ENCODE measurements at regions of chr1 and their contacts with region 1.

Region 1: GRCh38 chr1:206982216-206982615 is 12.0 kb upstream of the FCAMR start:
- DNase-seq: no peak
- H3K4me3 ChIP-seq: no peak overlapping the region
- H3K27ac ChIP-seq: no peak overlapping the region
- H3K4me1 ChIP-seq: no peaks in the 10 kb centered on the region
- H3K27me3 ChIP-seq: peaks cover 0 to 12% (median 0%) of the 10 kb centered on the region in 7 donors
- CTCF ChIP-seq: peak; percentile 49 to 81 (median 72)
- POLR2A ChIP-seq: no peak

Region 2: DNA sequence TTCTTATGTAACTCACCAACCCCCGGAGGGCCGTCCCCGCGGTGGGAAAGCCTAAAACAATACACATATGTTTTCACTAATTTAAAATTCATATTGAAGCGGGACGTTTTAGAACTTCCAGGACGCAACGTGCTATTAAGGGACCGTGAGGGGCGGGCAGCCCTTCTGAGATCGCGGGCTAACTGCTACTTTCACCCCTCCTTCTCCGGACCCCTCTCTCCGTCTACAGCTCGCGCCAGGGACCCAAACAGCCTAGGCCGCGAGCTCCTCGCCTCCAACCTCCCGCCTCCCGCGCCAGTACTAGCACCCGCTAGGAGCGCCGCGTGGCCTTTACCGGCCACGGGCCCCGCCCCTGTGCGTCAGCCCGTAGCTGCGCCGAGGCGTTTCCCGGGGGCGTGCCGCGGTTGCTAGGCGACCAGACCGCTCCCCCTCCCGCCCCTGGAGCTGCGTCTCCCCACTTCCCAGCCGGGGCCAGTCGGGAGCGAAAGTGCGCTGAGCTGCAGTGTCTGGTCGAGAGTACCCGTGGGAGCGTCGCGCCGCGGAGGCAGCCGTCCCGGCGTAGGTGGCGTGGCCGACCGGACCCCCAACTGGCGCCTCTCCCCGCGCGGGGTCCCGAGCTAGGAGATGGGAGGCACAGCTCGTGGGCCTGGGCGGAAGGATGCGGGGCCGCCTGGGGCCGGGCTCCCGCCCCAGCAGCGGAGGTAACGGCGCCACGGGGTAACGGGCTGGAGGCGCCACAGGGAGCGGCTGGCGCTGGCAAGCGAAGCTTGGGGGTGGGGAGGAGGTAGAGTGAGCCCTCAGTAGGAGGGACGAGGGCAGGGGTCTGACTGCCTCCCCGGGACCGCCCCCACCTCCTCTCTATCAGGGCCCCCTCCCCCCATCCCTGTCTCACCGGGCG is 346.9 kb before region 1 on chr1 and contains the start of gene DYRK3:
- intact Hi-C with region 1: loop called (anchors 10 kb)
- DNase-seq: peak; percentile 97
- H3K4me3 ChIP-seq: peak within 1 kb of the TSS; percentile 68 to 96 (median 86)
- H3K27ac ChIP-seq: peak within 1 kb of the TSS in 7 of 8 donors; percentile 56 to 80 (median 68)
- H3K4me1 ChIP-seq: peaks cover 8 to 46% (median 28%) of the 10 kb centered on the region in 6 donors
- H3K27me3 ChIP-seq: peaks cover 0 to 11% (median 0%) of the 10 kb centered on the region in 7 donors
- CTCF ChIP-seq: peak in 7 of 11 experiments; percentile 5 to 49 (median 31)
- POLR2A ChIP-seq: peak in 1 of 3 donors; percentile 56
- total RNA-seq, gene DYRK3: 2.4 to 6.6 (median 4.3) TPM

Region 3: DNA sequence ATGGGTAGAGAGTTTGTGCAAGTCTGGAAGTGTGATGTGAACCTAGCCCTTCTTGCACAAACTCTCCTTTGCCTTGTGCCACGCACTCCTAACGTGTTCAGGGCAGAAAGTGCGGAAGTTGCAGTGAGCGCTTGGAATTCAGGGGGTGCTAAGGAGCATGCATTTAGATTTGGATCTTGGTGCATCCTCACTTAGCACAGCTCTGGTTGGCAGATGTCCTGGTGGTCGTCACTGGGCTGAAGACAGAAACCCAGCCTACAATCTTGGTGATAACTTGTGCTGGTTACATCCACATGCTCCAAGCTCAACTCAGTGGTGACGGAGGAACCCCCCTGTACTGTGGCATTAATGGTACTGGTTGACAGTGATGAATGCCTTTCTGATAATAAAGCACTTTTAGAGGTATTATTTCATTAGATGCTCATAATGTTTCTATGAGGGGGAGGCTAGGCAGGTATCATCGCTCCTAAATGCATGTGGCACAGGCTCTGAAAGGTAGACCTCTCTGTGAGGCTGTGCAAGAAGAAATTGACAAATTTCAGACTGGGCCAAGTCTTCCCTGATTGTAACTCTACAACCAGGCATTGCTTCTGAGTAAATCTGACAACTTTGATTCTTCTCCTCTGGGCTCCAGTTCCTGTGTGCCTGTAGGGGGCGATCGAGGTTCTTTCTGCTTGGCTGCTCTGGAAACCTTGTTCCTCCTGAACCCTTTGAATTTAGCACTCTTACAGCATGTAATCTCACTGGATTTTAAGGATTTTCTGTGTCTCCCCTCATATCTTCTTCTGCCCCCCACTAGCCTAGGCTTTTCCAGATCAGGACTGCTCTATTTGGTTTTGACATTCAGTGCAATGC is 256.9 kb before region 1 on chr1:
- intact Hi-C with region 1: loop called (anchors 10 kb)
- DNase-seq: no peak
- H3K4me3 ChIP-seq: no peak overlapping the region
- H3K27ac ChIP-seq: peak overlapping the region in 3 of 8 donors; percentile 15 to 44 (median 39)
- H3K4me1 ChIP-seq: peaks cover 22 to 100% (median 66%) of the 10 kb centered on the region in 6 donors
- H3K27me3 ChIP-seq: no peaks in the 10 kb centered on the region
- CTCF ChIP-seq: peak in 10 of 11 experiments; percentile 41 to 73 (median 54)
- POLR2A ChIP-seq: no peak

Region 4: DNA sequence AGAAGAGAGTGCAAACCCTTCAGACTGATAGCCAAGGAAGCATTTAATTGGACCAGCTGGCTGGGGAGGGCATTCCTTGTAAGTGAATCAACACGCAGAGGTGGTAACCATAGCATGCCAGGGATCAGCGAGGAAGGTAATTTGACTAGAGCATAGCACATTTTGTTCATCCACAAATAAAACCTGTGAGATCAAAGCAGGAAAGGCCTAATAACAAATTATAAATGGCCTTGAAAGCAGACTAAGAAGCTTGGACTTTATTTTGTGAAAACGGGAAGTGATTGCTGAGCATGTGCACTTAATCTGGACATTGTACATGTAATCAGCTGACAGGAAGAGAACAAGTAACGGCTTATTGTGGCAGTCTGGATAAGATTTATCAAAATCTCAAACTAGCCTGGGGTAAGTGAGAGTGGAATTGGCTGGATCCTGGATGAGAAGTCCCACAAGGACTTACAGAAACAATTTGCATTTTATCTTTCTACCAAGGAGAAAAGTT is 327.6 kb after region 1 on chr1:
- intact Hi-C with region 1: no loop called
- DNase-seq: no peak
- H3K4me3 ChIP-seq: peak overlapping the region in 1 of 8 donors; percentile 26
- H3K27ac ChIP-seq: peak overlapping the region; percentile 64 to 86 (median 80)
- H3K4me1 ChIP-seq: peaks cover 22 to 40% (median 33%) of the 10 kb centered on the region in 6 donors
- H3K27me3 ChIP-seq: no peaks in the 10 kb centered on the region
- CTCF ChIP-seq: no peak
- POLR2A ChIP-seq: no peak

Region 5: DNA sequence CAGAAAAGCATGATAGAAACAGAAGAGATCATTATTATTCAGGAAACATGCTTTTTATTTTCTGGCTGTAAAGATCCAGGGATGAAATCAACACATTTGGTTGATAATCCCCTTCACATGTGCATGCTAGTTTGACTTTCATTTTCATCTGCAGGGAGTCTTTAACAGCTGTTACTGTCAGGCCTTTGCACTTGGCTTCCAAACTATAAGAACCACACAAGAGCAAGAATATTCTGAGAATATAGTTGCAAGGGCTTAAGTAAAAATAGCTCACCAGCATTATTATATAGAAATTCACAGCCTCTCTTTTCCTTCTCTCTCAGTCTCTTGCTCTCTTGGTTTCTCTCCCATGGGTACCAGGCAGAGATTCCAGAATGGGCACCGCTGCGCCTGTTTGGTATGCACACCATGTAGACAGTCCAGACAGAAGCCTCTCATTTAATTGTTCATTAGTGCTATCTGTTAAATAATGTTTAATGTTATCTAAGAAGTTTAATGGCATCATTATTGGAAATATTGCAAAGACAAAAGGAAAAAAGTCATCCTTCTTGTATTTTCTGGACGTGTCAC is 1884.3 kb after region 1 on chr1:
- intact Hi-C with region 1: no loop called
- DNase-seq: no peak
- H3K4me3 ChIP-seq: no peak overlapping the region
- H3K27ac ChIP-seq: no peak overlapping the region
- H3K4me1 ChIP-seq: no peaks in the 10 kb centered on the region
- H3K27me3 ChIP-seq: no peaks in the 10 kb centered on the region
- CTCF ChIP-seq: no peak
- POLR2A ChIP-seq: no peak

Measured in spleen (tissue), 13 donors.